H1 (cell line): ENCODE measurements at regions of chr15 and their contacts with region 1.

Region 1: DNA sequence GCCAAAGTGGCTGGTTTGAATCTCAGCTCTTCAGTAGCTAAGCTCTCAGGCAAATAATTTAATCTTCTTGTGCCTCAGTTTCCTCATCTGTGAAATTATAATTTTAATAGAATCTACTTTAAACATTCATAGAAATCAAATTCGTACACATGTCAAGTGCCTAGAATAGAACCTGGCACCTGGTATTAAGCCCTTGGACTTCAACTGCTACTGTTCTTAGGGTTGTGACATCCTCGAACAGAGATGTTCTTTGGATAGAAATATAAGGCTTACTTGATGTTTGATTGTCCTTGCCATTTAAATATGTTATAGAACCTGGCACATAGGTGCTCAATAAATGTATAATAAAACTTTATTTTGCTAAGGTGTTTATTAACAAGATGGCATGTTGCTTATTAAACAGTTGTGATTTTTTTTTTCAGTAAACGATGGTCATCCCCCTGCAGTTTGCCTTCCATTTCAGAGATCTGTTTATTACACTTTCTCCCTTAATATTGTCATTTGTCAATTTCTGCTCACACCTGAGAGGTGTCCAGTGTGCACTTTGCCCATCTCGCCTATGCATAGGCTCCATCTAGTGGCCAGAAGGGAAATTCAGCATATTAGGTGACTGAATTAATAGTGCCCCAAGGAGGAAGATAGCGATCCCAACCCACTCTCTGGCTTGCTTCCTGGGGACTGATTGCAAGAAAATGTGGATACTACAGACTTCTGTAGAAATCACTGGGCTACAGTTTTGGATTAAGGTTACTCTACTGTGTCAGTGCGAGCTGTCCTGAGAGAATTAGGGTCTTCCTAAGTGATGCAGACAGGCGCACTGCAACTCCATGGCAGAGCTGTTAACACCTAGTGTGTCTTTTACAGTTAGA is 10.7 kb downstream of the IGF1R start:
- DNase-seq: peak in 1 of 2 experiments; percentile 46
- H3K4me3 ChIP-seq: no peak overlapping the region
- H3K27ac ChIP-seq: no peak overlapping the region
- H3K4me1 ChIP-seq: peaks cover 8 to 31% (median 24%) of the 10 kb centered on the region in 4 experiments
- H3K27me3 ChIP-seq: no peaks in the 10 kb centered on the region
- CTCF ChIP-seq: peak; percentile 42 to 86 (median 72)
- EP300 ChIP-seq: no peak
- POLR2A ChIP-seq: no peak
- RAD21 ChIP-seq: peak; percentile 73 to 80

Region 2: DNA sequence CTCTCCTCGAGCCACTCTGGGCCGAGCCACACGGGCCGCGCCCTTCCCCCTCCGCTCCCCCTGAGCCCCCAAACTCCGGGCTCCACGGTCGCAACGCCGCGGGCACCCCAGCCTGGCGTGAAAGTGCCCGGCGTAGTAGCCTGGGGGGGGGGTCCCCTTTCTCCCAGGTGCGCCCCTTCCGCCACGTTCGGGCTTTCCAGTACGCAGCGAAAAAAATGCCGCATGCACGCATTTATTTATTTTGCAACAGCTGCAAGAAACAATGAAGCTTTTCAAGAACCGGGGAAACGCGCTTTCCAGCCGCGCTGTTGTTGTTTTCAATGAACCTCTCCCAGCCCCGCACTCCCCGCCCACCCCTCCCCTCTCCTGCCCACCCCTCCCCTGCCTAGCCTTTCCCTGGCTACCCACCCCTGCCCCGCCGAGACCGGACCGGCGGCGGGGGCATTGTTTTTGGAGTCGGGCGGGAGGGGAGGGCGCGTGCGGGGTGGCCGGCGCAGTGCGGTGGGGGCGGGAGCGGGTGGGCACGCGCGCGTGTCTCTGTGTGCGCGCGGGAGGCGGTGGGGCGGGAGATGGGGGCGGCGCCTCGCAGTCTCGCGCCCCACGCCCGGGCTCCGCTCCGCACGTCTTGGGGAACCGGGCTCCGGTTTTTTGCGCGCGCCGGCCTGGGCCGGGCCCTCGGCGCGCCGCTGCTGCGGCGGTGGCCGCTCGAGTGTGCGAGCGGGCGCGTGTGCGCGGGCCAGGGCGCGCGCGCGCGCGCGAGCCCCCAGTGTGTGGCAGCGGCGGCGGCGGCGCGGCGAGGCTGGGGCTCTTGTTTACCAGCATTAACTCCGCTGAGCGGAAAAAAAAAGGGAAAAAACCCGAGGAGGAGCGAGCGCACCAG is 11.1 kb before region 1 on chr15 and contains the start of gene IGF1R:
- CTCF ChIA-PET with region 1: interaction called, 21 read pairs
- POLR2A ChIA-PET with region 1: interaction called, 16 read pairs
- DNase-seq: peak in 1 of 2 experiments; percentile 89
- H3K4me3 ChIP-seq: peak within 1 kb of the TSS; percentile 64 to 89 (median 83)
- H3K27ac ChIP-seq: peak within 1 kb of the TSS; percentile 85
- H3K4me1 ChIP-seq: peaks cover 1 to 6% (median 4%) of the 10 kb centered on the region in 4 experiments; a peak in 3 of 7 replicates
- H3K27me3 ChIP-seq: no peaks in the 10 kb centered on the region
- CTCF ChIP-seq: no peak
- EP300 ChIP-seq: no peak
- POLR2A ChIP-seq: no peak
- RAD21 ChIP-seq: no peak
- total RNA-seq, gene IGF1R: 106 and 109 TPM in 2 replicates

Region 3: GRCh38 chr15:98674336-98674735 is 15.3 kb after region 1 on chr15:
- CTCF ChIA-PET with region 1: interaction called, 22 read pairs
- POLR2A ChIA-PET with region 1: interaction called, 14 read pairs
- DNase-seq: no peak
- H3K4me3 ChIP-seq: no peak overlapping the region
- H3K27ac ChIP-seq: 0 out of 2 replicates have a peak overlapping the region, but pooled peaks have one; percentile 1
- H3K4me1 ChIP-seq: peaks cover 14 to 36% (median 25%) of the 10 kb centered on the region in 4 experiments
- H3K27me3 ChIP-seq: no peaks in the 10 kb centered on the region
- CTCF ChIP-seq: no peak
- EP300 ChIP-seq: no peak
- POLR2A ChIP-seq: no peak
- RAD21 ChIP-seq: no peak

Region 4: DNA sequence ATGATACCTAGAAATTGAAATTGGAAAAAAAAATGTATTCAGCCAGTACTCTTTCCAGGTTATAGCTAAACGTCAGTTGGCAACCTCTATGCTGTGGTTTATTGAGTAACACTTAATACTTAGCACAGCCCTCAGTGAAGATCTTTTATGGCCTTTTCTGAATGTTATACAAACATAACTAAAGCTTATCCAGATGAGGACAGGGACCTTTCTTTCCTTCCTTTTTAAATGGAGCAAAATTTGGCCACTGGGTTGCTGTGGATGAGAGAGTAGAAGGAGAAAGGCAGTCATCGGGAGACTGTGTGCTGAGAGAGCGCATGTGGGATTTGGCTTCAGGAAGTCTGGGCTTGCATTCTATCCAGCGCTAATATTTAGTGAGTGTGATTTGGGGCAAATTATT is 25.4 kb after region 1 on chr15:
- CTCF ChIA-PET with region 1: interaction called, 12 read pairs
- POLR2A ChIA-PET with region 1: no interaction called
- DNase-seq: no peak
- H3K4me3 ChIP-seq: no peak overlapping the region
- H3K27ac ChIP-seq: no peak overlapping the region
- H3K4me1 ChIP-seq: peaks cover 7 to 24% (median 20%) of the 10 kb centered on the region in 4 experiments
- H3K27me3 ChIP-seq: no peaks in the 10 kb centered on the region; a peak in 1 of 7 replicates
- CTCF ChIP-seq: no peak
- EP300 ChIP-seq: no peak
- POLR2A ChIP-seq: no peak
- RAD21 ChIP-seq: no peak